Sciatic nerve (tissue), 2 donors: ENCODE measurements at regions of chr10 and their contacts with region 1.

Region 1: GRCh38 chr10:54914049-54914448 is 113.0 kb upstream of the PCDH15 start:
- DNase-seq: no peak
- ATAC-seq: no peak

Region 2: GRCh38 chr10:55550241-55550640 is 636.2 kb after region 1 on chr10:
- intact Hi-C with region 1: loop called (anchors 5 kb)
- DNase-seq: no peak
- ATAC-seq: no peak